Naive thymus-derived CD4-positive, alpha-beta T cell (primary cell): ENCODE measurements at regions of chr3 and their contacts with region 1.

Region 1: GRCh38 chr3:122754929-122755328 is 38.7 kb downstream of the HSPBAP1 start:
- DNase-seq: peak in 7 of 9 donors; percentile 10 to 56 (median 44)
- ATAC-seq: peak; percentile 88
- H3K4me3 ChIP-seq: no peak overlapping the region
- H3K4me3 Mint-ChIP-seq: no peak overlapping the region
- H3K27ac ChIP-seq: no peak overlapping the region
- H3K27ac Mint-ChIP-seq: no peak overlapping the region
- H3K4me1 ChIP-seq: no peaks in the 10 kb centered on the region
- H3K4me1 Mint-ChIP-seq: peaks cover 0 to 10% (median 0%) of the 10 kb centered on the region in 7 donors
- H3K27me3 ChIP-seq: no peaks in the 10 kb centered on the region
- H3K27me3 Mint-ChIP-seq: no peaks in the 10 kb centered on the region

Region 2: DNA sequence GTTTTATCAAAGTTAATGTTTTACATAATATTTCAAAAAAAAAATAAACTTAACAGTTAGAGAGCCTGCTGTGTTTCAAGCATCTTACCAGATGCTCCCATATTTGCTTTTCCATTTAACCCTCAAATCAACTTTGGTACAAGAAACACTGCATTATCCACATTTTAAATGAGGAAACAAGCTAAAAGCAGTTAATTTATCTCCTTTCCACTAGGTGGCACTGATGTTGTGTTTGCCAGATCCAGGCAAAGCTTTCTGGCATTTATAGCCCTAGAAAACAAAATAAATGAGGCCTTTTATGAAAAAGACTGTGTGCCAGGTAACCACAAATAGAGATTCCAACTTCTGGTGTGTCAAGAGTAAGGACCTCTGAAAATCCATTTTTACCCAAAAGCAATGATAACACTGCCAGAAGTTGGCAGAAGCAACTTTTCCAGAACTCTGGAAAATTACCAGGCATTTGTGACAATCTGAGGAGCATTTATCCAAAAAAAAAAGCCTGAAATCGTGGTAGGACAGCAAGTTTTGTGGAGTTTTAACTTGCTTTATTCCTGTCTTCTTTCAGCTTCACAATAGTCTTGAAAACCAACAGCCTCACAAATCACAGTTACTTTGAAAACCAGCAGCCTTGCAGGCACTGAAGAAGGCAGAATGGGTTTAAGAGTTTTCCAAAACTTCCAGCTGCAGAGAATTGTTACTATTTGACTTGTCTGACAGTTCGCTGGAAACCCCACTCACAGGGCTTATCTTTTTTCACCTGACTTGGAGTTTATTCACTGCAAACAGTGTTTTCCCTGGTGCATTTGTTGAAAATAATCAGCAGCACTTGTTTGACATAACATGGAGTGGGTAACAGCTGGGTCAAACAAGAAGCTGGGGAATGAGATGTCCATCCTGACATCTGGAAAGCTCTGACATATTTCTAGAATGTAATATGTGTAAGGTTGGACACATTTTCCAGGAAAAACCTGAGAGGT is 361.8 kb before region 1 on chr3:
- CTCF ChIA-PET with region 1: interaction called, 4 read pairs
- POLR2A ChIA-PET with region 1: no interaction called
- intact Hi-C with region 1: loop called in 1 of 2 experiments (anchors 5 kb)
- DNase-seq: peak in 7 of 9 donors; percentile 27 to 56 (median 46)
- ATAC-seq: peak; percentile 75
- H3K4me3 ChIP-seq: no peak overlapping the region
- H3K4me3 Mint-ChIP-seq: no peak overlapping the region
- H3K27ac ChIP-seq: no peak overlapping the region
- H3K27ac Mint-ChIP-seq: no peak overlapping the region
- H3K4me1 ChIP-seq: no peaks in the 10 kb centered on the region
- H3K4me1 Mint-ChIP-seq: peaks cover 7 to 36% (median 18%) of the 10 kb centered on the region in 7 donors
- H3K27me3 ChIP-seq: no peaks in the 10 kb centered on the region
- H3K27me3 Mint-ChIP-seq: no peaks in the 10 kb centered on the region

Region 3: GRCh38 chr3:122793568-122794416 is 38.9 kb after region 1 on chr3 and contains the start of gene HSPBAP1:
- CTCF ChIA-PET with region 1: interaction called, 3 read pairs
- POLR2A ChIA-PET with region 1: interaction called, 3 read pairs
- intact Hi-C with region 1: loop called (anchors 1 to 2 kb)
- DNase-seq: peak; percentile 71 to 90 (median 86)
- ATAC-seq: peak; percentile 77
- H3K4me3 ChIP-seq: peak within 1 kb of the TSS; percentile 83
- H3K4me3 Mint-ChIP-seq: peak within 1 kb of the TSS in 5 of 10 donors; percentile 91 to 97 (median 95)
- H3K27ac ChIP-seq: peak within 1 kb of the TSS; percentile 82
- H3K27ac Mint-ChIP-seq: peak within 1 kb of the TSS in 6 of 9 donors; percentile 79 to 99 (median 96)
- H3K4me1 ChIP-seq: peaks cover 22 to 34% of the 10 kb centered on the region in 2 donors
- H3K4me1 Mint-ChIP-seq: peaks cover 20 to 29% (median 27%) of the 10 kb centered on the region in 7 donors
- H3K27me3 ChIP-seq: no peaks in the 10 kb centered on the region
- H3K27me3 Mint-ChIP-seq: no peaks in the 10 kb centered on the region
- total RNA-seq, gene HSPBAP1: 9.0 to 31.5 (median 23.3) TPM

Region 4: GRCh38 chr3:122824465-122825381 is 69.8 kb after region 1 on chr3:
- CTCF ChIA-PET with region 1: no interaction called
- POLR2A ChIA-PET with region 1: no interaction called
- intact Hi-C with region 1: no loop called
- DNase-seq: no peak
- ATAC-seq: no peak
- H3K4me3 ChIP-seq: no peak overlapping the region
- H3K4me3 Mint-ChIP-seq: no peak overlapping the region
- H3K27ac ChIP-seq: no peak overlapping the region
- H3K27ac Mint-ChIP-seq: no peak overlapping the region
- H3K4me1 ChIP-seq: no peaks in the 10 kb centered on the region
- H3K4me1 Mint-ChIP-seq: peaks cover 0 to 2% (median 0%) of the 10 kb centered on the region in 7 donors
- H3K27me3 ChIP-seq: no peaks in the 10 kb centered on the region
- H3K27me3 Mint-ChIP-seq: no peaks in the 10 kb centered on the region

Region 5: DNA sequence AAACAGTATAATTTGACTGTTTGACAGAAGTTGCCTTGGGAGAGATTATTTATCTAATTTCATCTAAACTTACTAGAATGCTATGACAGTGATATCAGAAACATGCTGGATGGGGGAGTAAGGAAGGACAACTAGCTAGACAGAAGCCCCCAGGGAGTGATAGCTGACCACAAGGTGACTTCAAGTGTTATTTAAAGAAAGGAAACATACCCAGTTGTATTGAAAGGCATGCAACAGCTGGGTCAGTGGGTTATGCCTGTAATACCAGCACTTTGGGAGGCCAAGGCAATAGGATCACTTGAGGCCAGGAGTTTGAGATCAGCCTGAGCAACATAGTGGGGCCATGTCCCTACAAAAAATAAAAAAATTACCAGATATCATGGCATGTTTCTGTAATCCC is 109.6 kb after region 1 on chr3:
- CTCF ChIA-PET with region 1: interaction called, 3 read pairs
- POLR2A ChIA-PET with region 1: no interaction called
- intact Hi-C with region 1: loop called in 1 of 2 experiments (anchors 10 kb)
- DNase-seq: no peak
- ATAC-seq: no peak
- H3K4me3 ChIP-seq: no peak overlapping the region
- H3K4me3 Mint-ChIP-seq: no peak overlapping the region
- H3K27ac ChIP-seq: no peak overlapping the region
- H3K27ac Mint-ChIP-seq: no peak overlapping the region
- H3K4me1 ChIP-seq: no peaks in the 10 kb centered on the region
- H3K4me1 Mint-ChIP-seq: no peaks in the 10 kb centered on the region
- H3K27me3 ChIP-seq: no peaks in the 10 kb centered on the region
- H3K27me3 Mint-ChIP-seq: no peaks in the 10 kb centered on the region

Region 6: DNA sequence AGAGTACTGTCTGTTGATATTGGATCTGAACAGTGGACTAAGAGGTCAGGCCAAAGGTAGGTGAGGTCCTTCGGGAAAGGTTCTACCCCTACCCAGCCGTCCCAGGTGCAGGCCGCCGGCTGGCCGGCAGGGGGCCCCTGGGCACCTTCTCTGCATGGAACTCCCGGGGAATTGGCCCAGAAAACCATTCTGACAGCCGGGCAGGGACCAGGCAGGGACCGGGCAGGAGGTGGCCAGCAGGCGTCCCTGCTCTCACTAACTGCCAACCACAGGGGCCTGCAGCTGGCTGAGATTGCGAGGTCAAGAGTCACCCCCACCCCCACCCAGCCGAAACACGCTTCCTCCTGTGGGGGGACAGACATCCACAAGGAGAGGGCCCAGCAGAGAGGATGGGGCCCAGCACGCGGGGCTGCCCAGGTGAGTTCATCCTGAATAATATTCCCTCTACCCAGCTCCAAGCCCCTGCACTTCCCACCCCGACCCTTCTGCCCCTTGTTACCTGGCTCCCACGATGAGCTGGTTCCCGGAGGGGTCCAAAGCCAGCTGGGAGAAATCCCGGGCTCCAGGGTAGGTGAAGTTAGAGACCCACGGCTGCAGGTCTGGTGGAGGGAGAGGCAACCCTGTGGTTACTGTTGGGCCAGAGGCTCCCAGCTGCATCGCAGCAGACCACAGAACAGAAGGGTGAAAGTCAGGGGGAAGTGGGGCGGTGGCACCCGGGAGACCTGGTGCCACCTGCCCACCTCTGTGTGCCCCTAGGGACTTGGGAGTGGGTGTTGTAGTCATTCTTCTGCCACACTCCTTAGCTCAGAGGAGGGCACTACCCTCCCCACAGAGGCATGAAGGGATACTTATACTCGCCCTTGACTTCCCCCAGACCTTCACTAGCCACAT is 188.3 kb after region 1 on chr3:
- CTCF ChIA-PET with region 1: no interaction called
- POLR2A ChIA-PET with region 1: no interaction called
- intact Hi-C with region 1: loop called (anchors 5 to 10 kb)
- DNase-seq: peak in 1 of 9 donors; percentile 57
- ATAC-seq: peak; percentile 21
- H3K4me3 ChIP-seq: no peak overlapping the region
- H3K4me3 Mint-ChIP-seq: peak overlapping the region in 1 of 10 donors; percentile 39
- H3K27ac ChIP-seq: no peak overlapping the region
- H3K27ac Mint-ChIP-seq: no peak overlapping the region
- H3K4me1 ChIP-seq: peaks cover 0 to 13% of the 10 kb centered on the region in 2 donors
- H3K4me1 Mint-ChIP-seq: peaks cover 0 to 3% (median 0%) of the 10 kb centered on the region in 7 donors
- H3K27me3 ChIP-seq: no peaks in the 10 kb centered on the region
- H3K27me3 Mint-ChIP-seq: peaks cover 0 to 13% (median 6%) of the 10 kb centered on the region in 5 donors

Region 7: GRCh38 chr3:123028233-123028828 is 273.4 kb after region 1 on chr3:
- CTCF ChIA-PET with region 1: interaction called, 11 read pairs
- POLR2A ChIA-PET with region 1: no interaction called
- intact Hi-C with region 1: loop called (anchors 1 kb)
- DNase-seq: peak in 5 of 9 donors; percentile 19 to 36 (median 28)
- ATAC-seq: peak; percentile 40
- H3K4me3 ChIP-seq: peak overlapping the region; percentile 62
- H3K4me3 Mint-ChIP-seq: peak overlapping the region; percentile 76 to 93 (median 80)
- H3K27ac ChIP-seq: no peak overlapping the region
- H3K27ac Mint-ChIP-seq: no peak overlapping the region
- H3K4me1 ChIP-seq: peaks cover 2 to 10% of the 10 kb centered on the region in 2 donors
- H3K4me1 Mint-ChIP-seq: peaks cover 12 to 20% (median 17%) of the 10 kb centered on the region in 7 donors
- H3K27me3 ChIP-seq: peaks cover 7 to 13% of the 10 kb centered on the region in 2 donors
- H3K27me3 Mint-ChIP-seq: peaks cover 33 to 62% (median 35%) of the 10 kb centered on the region in 5 donors

Region 8: DNA sequence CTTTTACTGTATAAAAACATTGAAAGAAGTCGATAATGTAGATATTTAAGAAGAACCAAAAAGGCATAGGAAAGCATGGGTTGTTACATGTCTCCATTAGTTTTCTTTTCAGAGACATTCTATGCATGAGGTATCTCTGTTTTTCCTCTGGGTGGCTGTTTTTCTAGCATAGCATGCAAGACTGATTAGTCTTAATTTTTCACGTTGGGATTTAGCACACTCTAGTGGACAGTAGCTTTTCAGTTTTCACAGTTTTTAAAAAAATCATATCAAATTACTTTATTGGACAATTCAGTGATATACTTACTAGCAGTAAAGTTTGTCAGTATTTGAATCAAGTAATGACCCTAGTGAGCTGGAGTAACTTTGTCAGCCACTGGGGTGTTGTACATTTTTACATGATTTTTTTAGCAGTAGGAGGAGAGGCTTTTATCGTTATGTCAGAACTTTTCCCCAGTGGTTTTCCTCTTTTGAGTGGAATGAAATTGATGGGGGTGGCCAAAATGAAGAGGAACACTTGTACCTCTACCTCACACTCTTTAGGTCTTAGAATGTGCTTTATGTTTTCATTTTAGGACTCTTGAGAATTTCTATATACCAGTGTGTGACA is 504.0 kb after region 1 on chr3:
- CTCF ChIA-PET with region 1: no interaction called
- POLR2A ChIA-PET with region 1: no interaction called
- intact Hi-C with region 1: loop called in 1 of 2 experiments (anchors 2 kb)
- DNase-seq: peak in 5 of 9 donors; percentile 13 to 32 (median 21)
- ATAC-seq: peak; percentile 78
- H3K4me3 ChIP-seq: no peak overlapping the region
- H3K4me3 Mint-ChIP-seq: no peak overlapping the region
- H3K27ac ChIP-seq: no peak overlapping the region
- H3K27ac Mint-ChIP-seq: peak overlapping the region in 1 of 9 donors; percentile 74
- H3K4me1 ChIP-seq: no peaks in the 10 kb centered on the region
- H3K4me1 Mint-ChIP-seq: peaks cover 0 to 11% (median 0%) of the 10 kb centered on the region in 7 donors
- H3K27me3 ChIP-seq: no peaks in the 10 kb centered on the region
- H3K27me3 Mint-ChIP-seq: no peaks in the 10 kb centered on the region